Activated CD4-positive, alpha-beta T cell treated with anti-CD3 and anti-CD28 coated beads, Interleukin-2, amount 10 ng/mL, durations not matched to agents 24 days and 14 days (primary cell): ENCODE measurements at regions of chr2 and their contacts with region 1.

Region 1: DNA sequence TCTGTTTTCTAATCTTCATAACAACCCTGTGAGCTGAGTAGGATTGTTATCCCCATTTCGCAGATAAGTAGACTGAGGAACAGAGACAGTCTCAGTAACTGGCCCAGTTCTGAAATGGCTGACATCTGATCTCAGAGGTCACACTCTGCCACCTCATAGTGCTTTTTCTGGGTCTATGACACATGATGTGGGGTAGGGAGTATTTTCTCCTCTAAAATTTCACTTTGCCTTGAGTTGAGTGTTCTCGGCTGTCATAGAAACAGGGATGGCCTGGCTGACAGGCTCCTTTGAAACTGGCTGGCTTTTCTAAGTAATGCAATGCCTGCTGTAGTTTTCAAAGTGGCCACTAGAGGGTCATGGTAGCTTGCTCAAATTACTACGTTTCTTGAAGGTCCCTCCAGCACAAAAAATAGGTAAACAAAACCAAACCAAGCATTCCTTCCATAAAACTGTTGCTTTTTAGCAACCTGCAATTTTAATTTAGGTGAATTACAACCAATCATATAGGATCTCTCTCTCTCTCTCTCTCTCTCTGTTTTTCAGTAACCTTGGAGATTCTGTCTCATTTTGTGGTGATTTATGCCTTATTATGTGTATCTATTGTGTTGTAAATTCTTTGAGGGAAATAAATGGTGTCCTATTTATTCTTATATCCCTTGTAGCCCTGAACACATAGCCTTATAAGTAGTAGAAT is 84.2 kb upstream of the TTN start:
- DNase-seq: peak; percentile 90
- H3K4me3 Mint-ChIP-seq: no peak overlapping the region
- H3K27ac Mint-ChIP-seq: no peak overlapping the region
- H3K4me1 Mint-ChIP-seq: peaks cover 4% of the 10 kb centered on the region
- H3K27me3 Mint-ChIP-seq: no peaks in the 10 kb centered on the region

Region 2: GRCh38 chr2:178796079-178796677 is 95.2 kb before region 1 on chr2:
- intact Hi-C with region 1: no loop called
- DNase-seq: no peak
- H3K4me3 Mint-ChIP-seq: no peak overlapping the region
- H3K27ac Mint-ChIP-seq: no peak overlapping the region
- H3K4me1 Mint-ChIP-seq: no peaks in the 10 kb centered on the region
- H3K27me3 Mint-ChIP-seq: no peaks in the 10 kb centered on the region

Region 3: DNA sequence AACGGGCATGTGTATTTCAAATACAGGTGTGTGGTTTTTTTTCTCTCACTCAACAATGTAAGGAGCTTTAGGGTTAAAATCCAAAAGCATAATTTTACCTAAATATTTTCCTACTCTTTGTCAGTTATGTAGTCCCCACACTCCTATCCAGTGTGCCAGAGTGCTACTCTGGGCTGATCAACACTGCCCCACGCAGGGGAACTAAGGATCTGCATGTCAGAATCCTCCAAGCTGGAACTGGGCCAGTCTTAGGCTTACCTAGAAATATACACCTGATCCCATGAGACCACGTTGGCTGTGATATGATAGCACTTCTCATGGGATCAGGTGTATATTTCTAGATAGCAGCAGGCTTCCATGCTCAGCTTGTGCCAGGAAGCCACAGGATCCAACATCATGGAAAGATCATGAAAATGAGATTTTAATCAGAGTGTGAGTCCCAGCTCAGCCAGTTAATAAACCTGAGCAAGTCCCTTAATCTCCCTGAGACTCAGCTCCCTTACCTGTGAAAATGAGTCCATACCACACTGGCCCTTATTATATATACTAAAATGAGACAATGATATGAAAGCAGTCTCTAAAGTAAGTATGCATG is 128.8 kb after region 1 on chr2:
- intact Hi-C with region 1: loop called (anchors 2 kb)
- DNase-seq: peak; percentile 84
- H3K4me3 Mint-ChIP-seq: no peak overlapping the region
- H3K27ac Mint-ChIP-seq: no peak overlapping the region
- H3K4me1 Mint-ChIP-seq: peaks cover 10% of the 10 kb centered on the region
- H3K27me3 Mint-ChIP-seq: no peaks in the 10 kb centered on the region